Heart left ventricle (tissue), 16 donors: ENCODE measurements at regions of chr13 and their contacts with region 1.

Region 1: DNA sequence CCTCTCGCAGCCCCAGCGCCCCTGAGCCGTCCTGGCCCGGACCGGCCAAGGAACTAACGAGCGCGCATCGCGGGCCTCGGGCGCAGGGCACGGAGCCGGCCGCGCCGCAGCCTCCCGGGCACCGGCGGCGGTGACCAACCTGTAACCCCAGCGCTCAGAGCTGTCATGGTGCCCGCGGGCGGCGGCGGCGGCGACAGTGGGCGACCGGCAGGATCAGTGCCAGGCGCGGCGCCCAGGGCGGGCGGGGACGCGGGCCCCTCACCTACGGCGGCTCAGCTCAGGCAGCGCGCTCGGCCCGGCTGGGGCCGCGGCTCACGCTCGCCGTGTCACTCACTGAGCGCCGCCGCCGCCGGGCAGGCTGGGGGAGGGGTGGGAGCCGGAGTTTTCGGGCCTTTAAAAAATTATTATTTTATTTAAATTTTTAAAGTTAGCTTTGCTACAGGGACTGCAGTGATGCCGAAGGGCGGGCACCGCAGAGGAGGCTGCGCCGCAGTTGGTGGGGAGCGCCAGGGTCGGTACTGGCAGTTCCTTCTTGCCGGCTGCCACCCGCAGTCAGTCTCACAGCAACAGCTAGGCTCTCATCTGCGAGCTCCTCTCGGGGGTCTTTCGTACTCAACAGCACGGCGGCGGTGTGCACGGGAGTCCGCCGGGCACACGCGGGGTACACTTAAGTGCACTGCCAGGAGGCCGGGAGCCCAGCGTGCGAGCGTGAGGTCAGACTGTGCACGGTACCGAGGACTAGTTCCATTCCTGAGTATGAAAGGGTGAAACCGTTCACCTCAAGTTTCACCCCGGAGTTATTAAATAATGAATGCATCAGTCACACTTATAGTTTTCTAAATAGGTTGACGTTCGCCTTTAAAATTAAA is at the start of gene NALCN:
- DNase-seq: peak; percentile 15 to 64 (median 43)
- ATAC-seq: peak; percentile 48 to 95 (median 89)
- H3K4me3 ChIP-seq: peak within 1 kb of the TSS; percentile 43 to 86 (median 64)
- H3K27ac ChIP-seq: peak within 1 kb of the TSS in 11 of 12 donors; percentile 28 to 88 (median 73)
- H3K4me1 ChIP-seq: peaks cover 0 to 21% (median 0%) of the 10 kb centered on the region in 12 donors
- H3K27me3 ChIP-seq: peaks cover 0 to 29% (median 5%) of the 10 kb centered on the region in 9 donors
- CTCF ChIP-seq: no peak
- POLR2A ChIP-seq: no peak
- total RNA-seq, gene NALCN: 5.2 to 11.4 (median 6.9) TPM

Region 2: GRCh38 chr13:101489635-101490034 is 73.2 kb after region 1 on chr13:
- intact Hi-C with region 1: loop called in 1 of 10 experiments (anchors 5 kb)
- DNase-seq: no peak
- ATAC-seq: no peak
- H3K4me3 ChIP-seq: no peak overlapping the region
- H3K27ac ChIP-seq: no peak overlapping the region
- H3K4me1 ChIP-seq: peaks cover 0 to 5% (median 0%) of the 10 kb centered on the region in 12 donors
- H3K27me3 ChIP-seq: no peaks in the 10 kb centered on the region
- CTCF ChIP-seq: no peak
- POLR2A ChIP-seq: no peak

Region 3: DNA sequence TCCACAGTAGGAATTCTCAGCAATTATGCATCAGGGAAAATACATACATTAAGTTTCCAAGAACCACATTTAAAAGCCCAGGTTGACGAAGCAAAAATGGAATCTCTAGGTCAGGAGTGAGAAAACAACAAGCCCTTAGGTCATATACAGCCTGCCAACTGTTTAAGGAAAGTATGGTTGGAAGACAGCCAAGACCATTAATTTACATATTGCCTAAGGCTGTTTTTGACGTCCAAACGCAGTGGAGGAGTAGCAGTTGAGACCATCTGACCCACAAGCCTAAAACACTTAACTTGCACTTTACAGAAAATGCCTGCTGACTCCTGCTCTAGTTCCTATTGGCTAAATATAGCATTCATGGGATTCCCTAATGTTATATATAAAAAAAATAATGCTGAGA is 335.1 kb after region 1 on chr13:
- intact Hi-C with region 1: no loop called
- DNase-seq: no peak
- ATAC-seq: no peak
- H3K4me3 ChIP-seq: no peak overlapping the region
- H3K27ac ChIP-seq: no peak overlapping the region
- H3K4me1 ChIP-seq: peaks cover 0 to 9% (median 0%) of the 10 kb centered on the region in 12 donors
- H3K27me3 ChIP-seq: no peaks in the 10 kb centered on the region
- CTCF ChIP-seq: no peak
- POLR2A ChIP-seq: no peak